Right cardiac atrium (tissue), 5 donors: ENCODE measurements at regions of chr18 and their contacts with region 1.

Region 1: GRCh38 chr18:24413148-24413547 is 13.3 kb upstream of the IMPACT start:
- DNase-seq: peak in 1 of 3 donors; percentile 59
- ATAC-seq: no peak
- H3K4me3 ChIP-seq: no peak overlapping the region
- H3K27ac ChIP-seq: no peak overlapping the region
- H3K4me1 ChIP-seq: no peaks in the 10 kb centered on the region
- H3K27me3 ChIP-seq: no peaks in the 10 kb centered on the region

Region 2: DNA sequence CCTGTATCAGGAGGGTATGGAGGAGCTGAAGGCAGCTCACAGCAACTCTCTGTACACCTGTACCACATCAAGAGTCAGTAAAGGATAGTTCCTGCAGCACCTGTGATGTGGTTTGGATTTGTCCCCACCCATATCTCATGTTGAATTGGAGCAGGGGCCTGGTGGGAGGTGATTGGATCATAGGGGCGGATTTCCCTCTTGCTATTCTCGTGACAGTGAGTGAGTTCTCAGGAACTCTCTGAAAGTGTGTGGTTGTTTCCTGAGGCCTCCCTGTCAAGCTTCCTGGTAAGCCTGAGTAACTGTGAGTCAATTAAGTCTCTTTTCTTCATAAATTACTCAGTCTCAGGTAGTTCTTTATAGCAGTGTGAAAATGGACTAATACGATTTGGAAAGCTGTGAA is 44.4 kb before region 1 on chr18:
- intact Hi-C with region 1: loop called in 1 of 4 experiments (anchors 10 kb)
- DNase-seq: no peak
- ATAC-seq: no peak
- H3K4me3 ChIP-seq: no peak overlapping the region
- H3K27ac ChIP-seq: no peak overlapping the region
- H3K4me1 ChIP-seq: no peaks in the 10 kb centered on the region
- H3K27me3 ChIP-seq: no peaks in the 10 kb centered on the region